Activated CD4-positive, alpha-beta T cell treated with anti-CD3 and anti-CD28 coated beads, Interleukin-2, amount 10 ng/mL, durations not matched to agents 7 days and 5 days (primary cell): ENCODE measurements at regions of chr14 and their contacts with region 1.

Region 1: GRCh38 chr14:55077155-55077554 is 25.7 kb downstream of the MAPK1IP1L start:
- DNase-seq: peak; percentile 25
- H3K4me3 Mint-ChIP-seq: no peak overlapping the region
- H3K27ac Mint-ChIP-seq: no peak overlapping the region
- H3K4me1 Mint-ChIP-seq: peaks cover 25% of the 10 kb centered on the region
- H3K27me3 Mint-ChIP-seq: no peaks in the 10 kb centered on the region

Region 2: GRCh38 chr14:55043528-55043927 is 33.6 kb before region 1 on chr14:
- CTCF ChIA-PET with region 1: no interaction called
- POLR2A ChIA-PET with region 1: no interaction called
- DNase-seq: no peak
- H3K4me3 Mint-ChIP-seq: no peak overlapping the region
- H3K27ac Mint-ChIP-seq: no peak overlapping the region
- H3K4me1 Mint-ChIP-seq: peaks cover 2% of the 10 kb centered on the region
- H3K27me3 Mint-ChIP-seq: no peaks in the 10 kb centered on the region

Region 3: DNA sequence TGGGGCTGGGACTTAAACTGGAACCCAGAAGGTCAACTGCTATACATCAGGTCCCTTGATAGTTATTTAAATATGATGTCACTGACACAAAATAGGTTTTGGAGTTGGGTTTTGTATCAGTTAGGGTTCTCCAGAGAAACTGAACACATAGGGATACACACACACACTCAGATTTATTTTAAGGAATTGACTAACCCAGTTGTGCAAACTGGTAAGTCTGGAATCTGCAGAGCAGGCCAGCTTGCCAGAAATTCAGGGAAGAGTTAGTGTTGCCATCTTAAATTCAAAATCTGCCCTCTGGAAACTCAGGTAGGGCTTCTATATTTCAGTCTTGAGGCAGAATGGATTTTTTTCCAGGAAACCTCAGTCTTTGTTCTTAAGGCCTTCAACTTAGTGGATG is 11.2 kb after region 1 on chr14:
- CTCF ChIA-PET with region 1: interaction called, 11 read pairs
- POLR2A ChIA-PET with region 1: no interaction called
- DNase-seq: no peak
- H3K4me3 Mint-ChIP-seq: no peak overlapping the region
- H3K27ac Mint-ChIP-seq: no peak overlapping the region
- H3K4me1 Mint-ChIP-seq: peaks cover 23% of the 10 kb centered on the region
- H3K27me3 Mint-ChIP-seq: peaks cover 7% of the 10 kb centered on the region